BJ (cell line): ENCODE measurements at regions of chr1 and their contacts with region 1.

Region 1: DNA sequence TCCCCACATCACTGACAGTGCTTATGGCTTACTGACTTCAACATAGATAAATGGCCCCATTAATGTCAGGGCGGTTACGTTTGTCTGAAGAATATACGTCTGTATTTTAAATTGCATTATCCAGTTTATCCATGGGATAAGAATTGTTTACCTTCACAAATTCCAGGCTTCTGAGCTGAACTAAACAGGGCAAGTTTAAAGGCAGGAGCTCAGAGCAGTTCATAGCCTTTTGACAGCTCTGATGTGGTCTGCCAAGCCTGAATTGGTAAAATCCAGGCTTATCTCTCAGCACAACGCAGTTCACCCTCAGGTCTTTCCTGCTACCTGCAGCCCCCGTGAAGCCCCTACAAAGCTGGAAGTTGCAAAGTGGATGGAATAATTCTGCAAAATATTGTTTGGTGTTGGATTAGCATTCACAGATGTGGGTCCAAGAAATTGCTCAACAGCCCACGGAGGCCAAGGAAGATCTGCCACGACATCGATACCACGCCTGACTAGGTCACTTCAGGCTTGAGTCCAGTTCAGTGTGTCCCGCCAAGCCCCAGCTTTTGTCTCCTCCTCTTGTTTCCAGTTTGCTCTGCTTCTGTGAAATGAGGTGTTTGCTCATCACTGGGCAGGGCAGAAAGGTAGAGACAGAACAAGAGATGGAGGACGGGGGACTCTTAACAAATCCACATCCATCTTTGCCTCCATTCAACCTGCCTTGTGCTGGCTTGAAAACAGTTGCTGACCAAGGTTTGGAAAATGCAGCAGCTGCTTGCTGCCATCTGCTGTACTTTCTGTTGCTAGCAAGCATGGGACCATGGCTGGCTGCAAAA is 79.8 kb upstream of the GREM2 start:
- DNase-seq: no peak
- H3K4me3 ChIP-seq: no peak overlapping the region
- H3K27me3 ChIP-seq: no peaks in the 10 kb centered on the region
- CTCF ChIP-seq: peak; percentile 93

Region 2: GRCh38 chr1:240027059-240027462 is 664.7 kb before region 1 on chr1:
- CTCF ChIA-PET with region 1: interaction called, 18 read pairs
- POLR2A ChIA-PET with region 1: no interaction called
- DNase-seq: no peak
- H3K4me3 ChIP-seq: no peak overlapping the region
- H3K27me3 ChIP-seq: no peaks in the 10 kb centered on the region
- CTCF ChIP-seq: peak; percentile 90

Region 3: DNA sequence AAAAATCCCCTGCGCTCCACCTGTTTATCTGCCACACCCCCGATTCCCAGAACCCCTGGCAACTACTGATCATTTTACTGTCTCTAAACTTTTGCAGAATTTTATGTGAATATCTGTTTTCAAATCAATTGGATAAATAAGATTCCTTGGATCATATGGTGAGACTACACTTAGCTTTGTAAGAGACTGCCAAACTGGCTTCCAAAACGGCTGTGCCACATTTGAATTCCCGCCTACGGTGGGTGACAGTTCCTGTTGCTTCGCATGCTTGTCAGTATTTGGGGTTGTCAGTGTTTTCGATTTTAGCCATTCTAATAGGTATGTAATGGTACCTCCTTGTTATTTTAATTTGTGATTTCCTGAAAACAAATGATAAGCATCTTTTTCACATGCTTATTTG is 622.8 kb before region 1 on chr1:
- CTCF ChIA-PET with region 1: no interaction called
- POLR2A ChIA-PET with region 1: no interaction called
- DNase-seq: no peak
- H3K4me3 ChIP-seq: no peak overlapping the region
- H3K27me3 ChIP-seq: no peaks in the 10 kb centered on the region
- CTCF ChIP-seq: no peak

Region 4: DNA sequence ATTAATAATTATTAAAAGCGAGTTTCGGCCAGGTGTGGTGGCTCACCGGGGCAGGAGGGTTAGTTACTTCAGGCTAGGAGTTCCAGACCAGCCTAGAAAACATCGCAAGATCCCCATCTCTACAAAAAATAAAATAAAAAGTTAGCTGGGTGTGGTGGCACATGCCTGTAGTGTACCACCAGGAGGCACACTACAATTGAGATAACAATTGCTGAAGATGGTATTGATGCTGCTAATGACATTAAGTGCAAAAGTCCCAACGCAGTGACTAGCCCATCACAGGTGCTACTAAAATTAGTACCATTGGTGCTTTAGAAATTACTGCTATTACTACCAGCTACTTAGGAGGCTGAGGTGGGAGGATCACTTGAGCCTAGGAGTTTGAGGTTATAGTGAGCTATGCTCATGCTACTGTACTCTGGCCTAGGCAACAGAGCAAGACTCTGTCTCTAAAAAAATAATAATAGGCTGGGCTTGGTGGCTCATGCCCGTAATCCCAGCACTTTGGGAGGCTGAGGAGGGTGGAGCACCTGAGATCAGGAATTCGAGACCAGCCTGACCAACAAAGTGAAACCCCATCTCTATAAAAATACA is 236.4 kb before region 1 on chr1:
- CTCF ChIA-PET with region 1: interaction called, 17 read pairs
- POLR2A ChIA-PET with region 1: no interaction called
- DNase-seq: no peak
- H3K4me3 ChIP-seq: no peak overlapping the region
- H3K27me3 ChIP-seq: no peaks in the 10 kb centered on the region
- CTCF ChIP-seq: peak; percentile 34; the same call in 1 of the 2 replicates

Region 5: GRCh38 chr1:240608707-240609106 is 83.0 kb before region 1 on chr1:
- CTCF ChIA-PET with region 1: interaction called, 10 read pairs
- POLR2A ChIA-PET with region 1: no interaction called
- DNase-seq: no peak
- H3K4me3 ChIP-seq: no peak overlapping the region
- H3K27me3 ChIP-seq: peaks cover 1% of the 10 kb centered on the region; the same call in 1 of the 2 replicates
- CTCF ChIP-seq: peak; percentile 37